Dendritic cell treated with granulocyte-macrophage colony-stimulating factor and Interleukin-4, amounts not matched to agents 40 ng/mL and 50 ng/mL, for 4 days (primary cell): ENCODE measurements at regions of chr5 and their contacts with region 1.

Region 1: DNA sequence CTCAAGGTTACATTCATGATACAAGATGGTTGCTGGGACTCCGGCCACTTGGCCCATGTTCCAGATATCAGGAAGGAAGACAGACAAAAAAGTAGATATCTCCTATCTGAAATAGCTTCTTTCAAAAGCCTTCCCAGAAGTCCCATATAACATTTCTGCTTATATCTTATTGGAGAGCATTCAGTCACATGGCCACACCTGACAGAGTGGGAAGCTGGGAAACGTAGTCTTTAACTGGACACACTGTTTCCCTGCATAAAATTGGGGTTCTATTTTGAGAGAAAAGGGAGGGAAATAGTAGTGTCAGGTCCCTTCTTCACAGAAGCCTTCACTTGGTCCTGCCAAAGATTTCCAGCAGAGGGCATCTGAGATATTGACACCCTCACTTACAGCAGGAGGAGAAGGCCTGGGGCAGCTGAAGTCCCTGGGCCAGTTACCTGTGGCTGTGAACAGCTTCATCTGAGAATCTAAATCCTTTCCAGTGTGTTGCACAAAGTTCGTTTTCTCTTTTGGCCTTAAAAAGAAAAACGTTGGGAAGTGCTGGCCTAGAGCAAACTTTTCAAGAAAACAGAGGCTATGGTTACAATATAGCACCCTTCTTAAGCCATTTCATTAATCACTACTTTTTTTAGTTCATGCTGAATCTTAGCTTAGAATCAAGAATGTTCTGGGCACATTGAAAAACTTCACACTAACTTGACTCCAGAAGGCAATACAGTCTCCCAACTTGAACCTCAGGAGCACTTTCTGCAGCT is 33.5 kb downstream of the SPEF2 start:
- H3K4me3 Mint-ChIP-seq: no peak overlapping the region
- H3K27ac Mint-ChIP-seq: no peak overlapping the region
- H3K4me1 Mint-ChIP-seq: peaks cover 6% of the 10 kb centered on the region
- H3K27me3 Mint-ChIP-seq: no peaks in the 10 kb centered on the region

Region 2: GRCh38 chr5:35777358-35778087 is 126.3 kb after region 1 on chr5:
- intact Hi-C with region 1: loop called (anchors 2 kb)
- H3K4me3 Mint-ChIP-seq: no peak overlapping the region
- H3K27ac Mint-ChIP-seq: no peak overlapping the region
- H3K4me1 Mint-ChIP-seq: peaks cover 6% of the 10 kb centered on the region
- H3K27me3 Mint-ChIP-seq: no peaks in the 10 kb centered on the region